Mucosa of descending colon (tissue), 3 donors: ENCODE measurements at regions of chr1 and their contacts with region 1.

Region 1: GRCh38 chr1:6245086-6245868 is 1.3 kb downstream of the HES3 start:
- DNase-seq: peak; percentile 81 to 89 (median 88)
- ATAC-seq: peak; percentile 85
- H3K4me3 ChIP-seq: no peak overlapping the region
- H3K4me1 ChIP-seq: peaks cover 18% of the 10 kb centered on the region
- CTCF ChIP-seq: peak; percentile 75

Region 2: DNA sequence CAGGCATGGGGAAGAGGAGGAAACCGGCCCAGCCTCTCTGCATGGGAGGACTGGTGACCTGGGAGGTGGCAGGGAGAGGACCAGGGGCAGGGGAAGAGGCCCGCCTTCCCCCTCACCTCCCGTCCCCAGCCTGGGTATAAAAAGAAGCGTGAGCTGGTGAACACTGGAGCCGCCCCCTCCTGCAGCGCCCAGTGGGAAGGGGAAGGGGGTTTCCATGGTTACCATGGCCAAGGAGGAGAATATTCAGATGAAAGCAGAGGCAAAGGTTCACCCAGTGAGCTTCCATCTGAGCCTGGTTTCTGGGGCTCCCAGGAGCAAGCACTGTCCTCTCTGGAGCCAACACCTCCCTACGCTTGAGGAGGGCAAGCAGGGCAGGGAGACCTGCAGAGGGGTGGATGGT is 93.4 kb after region 1 on chr1:
- intact Hi-C with region 1: loop called (anchors 2 to 5 kb)
- DNase-seq: no peak
- ATAC-seq: no peak
- H3K4me3 ChIP-seq: no peak overlapping the region
- H3K4me1 ChIP-seq: peaks cover 2% of the 10 kb centered on the region
- CTCF ChIP-seq: no peak

Region 3: GRCh38 chr1:6343506-6344405 is 98.5 kb after region 1 on chr1:
- intact Hi-C with region 1: loop called (anchors 2 to 5 kb)
- DNase-seq: peak; percentile 83 to 92 (median 91)
- ATAC-seq: peak; percentile 88
- H3K4me3 ChIP-seq: no peak overlapping the region
- H3K4me1 ChIP-seq: peaks cover 17% of the 10 kb centered on the region
- CTCF ChIP-seq: peak; percentile 89